HCT116 (cell line): ENCODE measurements at regions of chr15 and their contacts with region 1.

Region 1: DNA sequence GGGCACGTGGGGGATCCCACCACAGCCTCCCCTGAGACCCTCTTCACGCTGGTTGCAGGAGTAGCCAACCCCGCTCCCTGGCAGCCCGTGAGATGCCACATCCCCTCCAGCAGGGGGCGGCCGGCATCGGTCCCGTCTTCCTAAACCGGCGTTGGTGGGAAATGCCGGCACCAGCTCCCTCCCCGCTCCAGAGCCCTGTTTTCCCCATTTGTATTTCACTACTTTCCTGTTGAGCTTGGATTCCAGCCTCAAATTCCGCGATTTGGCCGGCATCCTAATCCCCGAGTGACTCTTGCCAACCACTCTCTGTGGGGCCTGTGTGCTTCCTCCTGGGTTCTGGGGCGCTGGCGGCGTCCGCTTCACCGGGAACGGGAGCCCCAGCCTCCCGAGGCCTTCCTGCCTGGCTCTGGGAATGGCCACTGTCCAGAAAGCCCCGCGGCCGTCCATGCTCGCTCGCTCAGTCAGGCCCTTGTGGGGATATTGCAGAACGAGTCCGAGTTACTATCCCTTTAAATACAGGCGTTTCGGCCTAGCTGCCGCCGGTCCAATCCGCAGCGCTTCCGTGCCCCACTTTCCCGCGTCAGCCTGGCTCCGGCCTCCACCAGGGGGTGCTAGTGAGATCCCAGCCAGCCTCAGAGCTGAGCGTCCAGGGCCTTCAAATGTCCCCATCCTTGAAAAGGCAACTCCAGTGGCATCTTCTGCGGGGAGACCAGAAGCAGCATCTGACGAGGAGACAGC is 8.1 kb upstream of the ADAMTS17 start:
- DNase-seq: peak; percentile 70
- ATAC-seq: peak; percentile 94
- H3K4me3 ChIP-seq: peak overlapping the region; percentile 58 to 72
- H3K27ac ChIP-seq: peak overlapping the region; percentile 27; the same call in 1 of the 2 replicates
- H3K4me1 ChIP-seq: peaks cover 0 to 19% of the 10 kb centered on the region in 2 experiments; a peak in 1 of 4 replicates
- H3K27me3 ChIP-seq: no peaks in the 10 kb centered on the region
- CTCF ChIP-seq: peak; percentile 80 to 98 (median 81)
- POLR2A ChIP-seq: no peak
- RAD21 ChIP-seq: peak; percentile 59

Region 2: DNA sequence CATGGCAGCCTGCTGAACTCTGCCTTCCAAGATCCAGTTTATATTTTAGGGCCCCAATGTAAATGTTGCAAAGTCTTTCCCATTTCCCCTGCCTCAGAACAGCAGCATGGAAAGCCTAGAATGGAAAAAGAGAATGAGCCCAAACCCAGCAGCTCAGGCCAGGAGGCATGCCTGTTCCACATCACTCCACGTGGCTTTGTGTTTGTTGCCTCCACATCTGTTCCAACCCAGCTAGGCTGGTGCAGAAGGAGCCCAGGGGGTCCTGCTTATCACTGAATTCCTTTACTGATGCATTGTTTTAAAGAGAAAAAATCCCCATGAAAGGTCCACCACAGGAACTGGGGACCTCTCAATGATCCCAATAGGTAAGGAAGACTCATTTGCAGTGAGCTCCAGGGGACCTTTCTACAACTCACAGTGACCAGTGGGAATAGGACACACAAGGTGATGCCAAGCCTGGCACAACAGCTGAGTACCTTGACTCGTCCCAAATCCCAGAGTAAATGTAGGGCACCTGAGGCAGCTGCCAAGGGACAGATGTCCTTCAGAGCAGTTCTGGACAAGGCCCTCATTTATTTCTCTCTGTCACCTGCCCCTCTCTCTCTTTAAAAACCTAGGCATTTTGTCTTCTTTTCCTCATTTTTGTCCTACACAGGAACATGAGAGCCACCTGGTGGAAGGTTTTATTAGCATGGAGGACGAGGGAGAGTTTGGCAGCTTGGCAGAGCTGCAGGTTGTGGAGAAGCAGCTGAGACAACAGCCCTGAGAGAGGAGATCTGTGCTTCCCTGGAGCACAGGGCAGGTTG is 33.6 kb after region 1 on chr15:
- CTCF ChIA-PET with region 1: interaction called, 26 read pairs
- POLR2A ChIA-PET with region 1: no interaction called
- RAD21 ChIA-PET with region 1: interaction called in 1 of 2 experiments, 4 read pairs
- intact Hi-C with region 1: loop called (anchors 2 kb)
- DNase-seq: peak; percentile 8
- ATAC-seq: peak; percentile 78
- H3K4me3 ChIP-seq: no peak overlapping the region
- H3K27ac ChIP-seq: no peak overlapping the region
- H3K4me1 ChIP-seq: no peaks in the 10 kb centered on the region
- H3K27me3 ChIP-seq: no peaks in the 10 kb centered on the region
- CTCF ChIP-seq: peak; percentile 49 to 62 (median 54)
- POLR2A ChIP-seq: no peak
- RAD21 ChIP-seq: peak; percentile 67

Region 3: GRCh38 chr15:100572362-100572983 is 222.6 kb after region 1 on chr15:
- CTCF ChIA-PET with region 1: interaction called, 11 read pairs
- POLR2A ChIA-PET with region 1: no interaction called
- RAD21 ChIA-PET with region 1: interaction called in 1 of 2 experiments, 5 read pairs
- intact Hi-C with region 1: loop called (anchors 2 kb)
- DNase-seq: no peak
- ATAC-seq: no peak
- H3K4me3 ChIP-seq: no peak overlapping the region
- H3K27ac ChIP-seq: no peak overlapping the region
- H3K4me1 ChIP-seq: no peaks in the 10 kb centered on the region
- H3K27me3 ChIP-seq: no peaks in the 10 kb centered on the region
- CTCF ChIP-seq: peak; percentile 9 to 58 (median 28); a peak in 3 of 6 replicates
- POLR2A ChIP-seq: no peak
- RAD21 ChIP-seq: peak; percentile 28; the same call in 1 of the 2 replicates

Region 4: GRCh38 chr15:100602064-100602822 is 252.4 kb after region 1 on chr15 and contains the starts of genes ASB7 and LINS1:
- CTCF ChIA-PET with region 1: interaction called, 7 read pairs
- POLR2A ChIA-PET with region 1: no interaction called
- RAD21 ChIA-PET with region 1: no interaction called
- intact Hi-C with region 1: loop called (anchors 5 kb)
- DNase-seq: peak; percentile 100
- ATAC-seq: peak; percentile 94
- H3K4me3 ChIP-seq: peak within 1 kb of the TSS; percentile 73 to 98
- H3K27ac ChIP-seq: peak within 1 kb of the TSS; percentile 62
- H3K4me1 ChIP-seq: peaks cover 14 to 16% of the 10 kb centered on the region in 2 experiments
- H3K27me3 ChIP-seq: no peaks in the 10 kb centered on the region
- CTCF ChIP-seq: no peak
- POLR2A ChIP-seq: peak; percentile 32
- RAD21 ChIP-seq: no peak
- total RNA-seq, gene ASB7: 16.6 TPM
- total RNA-seq, gene LINS1: 14.7 TPM